B cell (primary cell): ENCODE measurements at regions of chr4 and their contacts with region 1.

Region 1: DNA sequence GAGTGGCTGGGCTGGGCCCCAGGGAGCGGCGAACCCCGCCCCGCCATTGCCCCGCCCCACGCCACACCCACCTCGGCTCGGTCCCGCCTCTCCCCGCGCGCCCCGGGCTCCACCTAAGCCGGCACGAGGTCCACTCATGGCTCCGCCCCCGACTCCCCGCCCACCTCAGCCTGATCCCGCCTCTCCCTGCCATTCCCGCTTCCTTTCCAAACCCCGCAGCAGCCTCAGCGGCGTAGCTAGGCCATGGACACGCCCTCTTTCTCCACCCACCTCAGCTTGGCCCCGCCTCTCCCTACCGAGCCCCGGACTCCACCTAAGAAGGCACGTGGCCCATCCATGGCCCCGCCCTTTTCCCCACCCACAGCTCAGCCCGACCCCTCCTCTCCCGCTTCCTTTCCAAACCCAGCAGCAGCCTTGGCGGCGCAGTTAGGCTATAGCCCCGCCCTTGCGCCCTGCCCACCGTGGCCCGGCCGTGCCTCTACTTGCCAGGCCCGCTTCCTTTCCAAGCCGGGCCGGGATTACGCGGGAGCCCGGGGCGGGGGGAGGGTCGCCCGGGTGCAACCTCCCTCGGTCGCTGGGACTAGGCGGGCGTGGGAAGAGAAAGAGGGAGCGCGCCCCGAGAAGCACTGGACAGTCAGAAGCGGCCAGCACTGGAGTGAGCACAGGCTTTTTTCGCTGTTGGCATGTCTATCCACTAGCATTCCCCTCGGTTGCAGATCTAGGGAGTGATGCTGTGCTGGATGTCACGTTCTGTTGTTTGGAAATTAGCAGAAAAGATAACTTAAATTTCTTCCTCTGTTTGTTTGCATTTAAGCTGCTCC is at the start of gene RELL1:
- DNase-seq: peak; percentile 96
- ATAC-seq: peak; percentile 85
- H3K4me3 ChIP-seq: peak within 1 kb of the TSS; percentile 66 to 86 (median 81)
- H3K4me3 Mint-ChIP-seq: peak within 1 kb of the TSS; percentile 92
- H3K27ac ChIP-seq: peak within 1 kb of the TSS; percentile 45 to 70
- H3K27ac Mint-ChIP-seq: peak within 1 kb of the TSS; percentile 89
- H3K4me1 ChIP-seq: peaks cover 31% of the 10 kb centered on the region in 2 donors
- H3K4me1 Mint-ChIP-seq: peaks cover 31% of the 10 kb centered on the region
- H3K27me3 ChIP-seq: peaks cover 0 to 12% (median 4%) of the 10 kb centered on the region in 4 experiments
- H3K27me3 Mint-ChIP-seq: peaks cover 12% of the 10 kb centered on the region
- CTCF ChIP-seq: no peak
- total RNA-seq, gene RELL1: 2.7 and 3.2 TPM in 2 replicates

Region 2: DNA sequence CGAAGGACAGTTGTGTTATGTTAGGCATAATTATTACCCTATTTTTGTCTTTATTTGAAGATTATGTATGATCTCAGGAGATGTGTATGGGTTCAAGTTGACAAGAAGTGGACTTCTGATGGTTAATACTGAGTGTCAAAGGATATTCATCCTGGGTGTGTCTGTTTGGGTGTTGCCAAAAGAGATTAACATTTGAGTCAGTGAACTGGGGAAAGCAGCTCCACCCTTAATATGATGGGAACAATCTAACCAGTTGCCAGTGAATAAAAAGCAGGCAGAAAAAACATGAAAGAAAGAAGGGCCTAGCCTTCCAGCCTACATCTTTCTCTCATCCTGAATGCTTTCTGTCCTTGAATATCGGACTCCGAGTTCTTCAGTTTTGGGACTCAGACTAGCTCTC is 1072.6 kb before region 1 on chr4:
- CTCF ChIA-PET with region 1: no interaction called
- POLR2A ChIA-PET with region 1: no interaction called
- intact Hi-C with region 1: no loop called
- DNase-seq: no peak
- ATAC-seq: no peak
- H3K4me3 ChIP-seq: no peak overlapping the region
- H3K4me3 Mint-ChIP-seq: no peak overlapping the region
- H3K27ac ChIP-seq: no peak overlapping the region
- H3K27ac Mint-ChIP-seq: no peak overlapping the region
- H3K4me1 ChIP-seq: no peaks in the 10 kb centered on the region
- H3K4me1 Mint-ChIP-seq: no peaks in the 10 kb centered on the region
- H3K27me3 ChIP-seq: no peaks in the 10 kb centered on the region
- H3K27me3 Mint-ChIP-seq: no peaks in the 10 kb centered on the region
- CTCF ChIP-seq: no peak

Region 3: GRCh38 chr4:37699868-37700481 is 13.4 kb after region 1 on chr4:
- CTCF ChIA-PET with region 1: no interaction called
- POLR2A ChIA-PET with region 1: no interaction called
- intact Hi-C with region 1: no loop called
- DNase-seq: no peak
- ATAC-seq: no peak
- H3K4me3 ChIP-seq: no peak overlapping the region
- H3K4me3 Mint-ChIP-seq: no peak overlapping the region
- H3K27ac ChIP-seq: no peak overlapping the region
- H3K27ac Mint-ChIP-seq: no peak overlapping the region
- H3K4me1 ChIP-seq: no peaks in the 10 kb centered on the region
- H3K4me1 Mint-ChIP-seq: no peaks in the 10 kb centered on the region
- H3K27me3 ChIP-seq: no peaks in the 10 kb centered on the region
- H3K27me3 Mint-ChIP-seq: peaks cover 8% of the 10 kb centered on the region
- CTCF ChIP-seq: no peak

Region 4: DNA sequence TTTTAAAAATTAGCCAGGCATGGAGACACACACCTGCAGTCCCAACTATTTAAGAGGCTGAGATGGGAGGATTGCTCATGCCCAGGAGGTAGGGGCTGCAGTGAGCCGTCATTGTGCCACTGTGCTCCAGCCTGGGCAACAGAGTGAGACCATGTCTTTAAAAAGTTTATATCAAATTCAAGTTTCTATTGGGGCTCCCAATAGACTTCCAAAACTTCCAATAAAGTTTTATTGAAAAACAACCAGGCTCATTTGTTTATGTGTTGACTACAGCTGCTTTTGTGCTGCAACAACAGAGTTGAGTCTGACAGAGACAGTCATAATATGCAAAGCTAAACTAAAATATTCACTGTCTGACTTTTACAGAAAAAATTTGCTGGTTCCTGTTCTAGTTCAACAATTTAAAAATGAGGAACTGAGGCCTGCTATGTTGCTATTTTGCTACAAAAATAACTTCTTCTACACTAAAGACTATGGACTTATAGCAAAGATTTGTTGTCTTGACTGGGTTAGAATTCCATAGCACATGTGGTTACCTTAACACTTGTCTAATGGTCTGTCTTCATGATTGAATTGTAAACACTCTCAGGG is 62.9 kb after region 1 on chr4:
- CTCF ChIA-PET with region 1: no interaction called
- POLR2A ChIA-PET with region 1: no interaction called
- intact Hi-C with region 1: loop called (anchors 5 kb)
- DNase-seq: peak; percentile 58
- ATAC-seq: peak; percentile 76
- H3K4me3 ChIP-seq: no peak overlapping the region
- H3K4me3 Mint-ChIP-seq: peak overlapping the region; percentile 43
- H3K27ac ChIP-seq: peak overlapping the region; percentile 38 to 52
- H3K27ac Mint-ChIP-seq: peak overlapping the region; percentile 76
- H3K4me1 ChIP-seq: peaks cover 35 to 37% of the 10 kb centered on the region in 2 donors
- H3K4me1 Mint-ChIP-seq: peaks cover 39% of the 10 kb centered on the region
- H3K27me3 ChIP-seq: no peaks in the 10 kb centered on the region
- H3K27me3 Mint-ChIP-seq: no peaks in the 10 kb centered on the region
- CTCF ChIP-seq: no peak